ENCODE measurements at regions of chr17 and their contacts with region 1.

Region 1: GRCh38 chr17:49659661-49660382 is 18.1 kb downstream of the SPOP start:
- DNase-seq: no peak
- H3K4me3 ChIP-seq: no peak overlapping the region
- H3K4me3 Mint-ChIP-seq: no peak overlapping the region
- H3K27ac ChIP-seq: no peak overlapping the region
- H3K27ac Mint-ChIP-seq: peak overlapping the region in 4 of 7 donors; percentile 17 to 57 (median 41)
- H3K4me1 ChIP-seq: peaks cover 0 to 4% of the 10 kb centered on the region in 2 donors
- H3K4me1 Mint-ChIP-seq: peaks cover 10% of the 10 kb centered on the region
- H3K27me3 ChIP-seq: no peaks in the 10 kb centered on the region
- H3K27me3 Mint-ChIP-seq: no peaks in the 10 kb centered on the region
- CTCF ChIP-seq: no peak

Region 2: GRCh38 chr17:49597928-49598655 is 61.7 kb before region 1 on chr17:
- intact Hi-C with region 1: loop called in 1 of 2 experiments (anchors 10 kb)
- DNase-seq: no peak
- H3K4me3 ChIP-seq: no peak overlapping the region
- H3K4me3 Mint-ChIP-seq: no peak overlapping the region
- H3K27ac ChIP-seq: peak overlapping the region in 1 of 2 donors; percentile 60
- H3K27ac Mint-ChIP-seq: peak overlapping the region in 3 of 7 donors; percentile 18 to 38 (median 20)
- H3K4me1 ChIP-seq: peaks cover 8% of the 10 kb centered on the region in 2 donors
- H3K4me1 Mint-ChIP-seq: peaks cover 16% of the 10 kb centered on the region
- H3K27me3 ChIP-seq: no peaks in the 10 kb centered on the region
- H3K27me3 Mint-ChIP-seq: peaks cover 0 to 1% (median 0%) of the 10 kb centered on the region in 3 donors
- CTCF ChIP-seq: no peak

Measured in CD14-positive monocyte (primary cell).